GM12878 (cell line): ENCODE measurements at regions of chr11 and their contacts with region 1.

Region 1: DNA sequence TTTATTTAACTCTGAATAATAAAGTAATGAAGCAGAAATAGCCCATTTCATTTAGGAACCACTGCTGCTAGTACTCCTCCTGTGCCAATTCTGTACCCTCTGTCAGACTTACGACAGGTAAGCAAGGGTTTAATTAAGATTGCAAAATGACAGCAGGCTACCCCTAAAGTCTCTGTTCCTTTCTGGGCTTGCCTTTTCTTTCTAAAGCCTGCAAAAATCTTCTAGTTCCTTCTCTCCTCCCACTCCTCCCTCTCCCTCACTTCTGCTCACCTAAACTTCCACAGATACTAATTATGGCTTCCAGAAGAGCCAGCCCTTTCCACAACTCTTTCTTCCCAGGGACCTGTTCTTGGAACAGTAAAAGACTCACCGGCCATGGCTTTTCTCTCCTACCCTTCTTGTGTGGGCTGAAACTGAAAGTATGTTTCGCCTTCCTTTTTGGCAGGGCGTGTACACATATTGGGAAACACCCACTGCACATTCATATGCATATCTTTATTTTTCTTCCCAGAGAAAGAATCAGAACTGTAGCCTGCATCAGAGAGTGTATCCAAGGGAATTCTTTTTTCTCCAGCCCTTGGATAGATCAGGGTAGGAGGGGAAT is at the start of gene CARD16:
- DNase-seq: no peak
- ATAC-seq: peak; percentile 98
- H3K4me3 ChIP-seq: peak within 1 kb of the TSS; percentile 85
- H3K27ac ChIP-seq: no peak within 1 kb of the TSS
- H3K4me1 ChIP-seq: no peaks in the 10 kb centered on the region
- H3K27me3 ChIP-seq: no peaks in the 10 kb centered on the region
- CTCF ChIP-seq: no peak
- EP300 ChIP-seq: no peak
- POLR2A ChIP-seq: peak; percentile 38; the same call in 1 of the 2 replicates
- RAD21 ChIP-seq: no peak
- polyA plus RNA-seq, gene CARD16: 75.8 to 76.3 TPM

Region 2: GRCh38 chr11:104564921-104565582 is 480.0 kb before region 1 on chr11:
- CTCF ChIA-PET with region 1: no interaction called
- POLR2A ChIA-PET with region 1: no interaction called
- RAD21 ChIA-PET with region 1: no interaction called
- SMC1A ChIA-PET with region 1: no interaction called
- in situ Hi-C with region 1: no loop called
- intact Hi-C with region 1: no loop called
- DNase-seq: no peak
- ATAC-seq: no peak
- H3K4me3 ChIP-seq: no peak overlapping the region
- H3K27ac ChIP-seq: no peak overlapping the region
- H3K4me1 ChIP-seq: no peaks in the 10 kb centered on the region
- H3K27me3 ChIP-seq: no peaks in the 10 kb centered on the region
- CTCF ChIP-seq: no peak
- EP300 ChIP-seq: no peak
- POLR2A ChIP-seq: no peak
- RAD21 ChIP-seq: no peak

Region 3: GRCh38 chr11:105033343-105033742 is 11.7 kb before region 1 on chr11:
- CTCF ChIA-PET with region 1: interaction called, 6 read pairs
- POLR2A ChIA-PET with region 1: interaction called, 6 read pairs
- RAD21 ChIA-PET with region 1: interaction called, 9 read pairs
- SMC1A ChIA-PET with region 1: interaction called, 21 read pairs
- in situ Hi-C with region 1: no loop called
- intact Hi-C with region 1: no loop called
- DNase-seq: no peak
- ATAC-seq: peak; percentile 58
- H3K4me3 ChIP-seq: peak overlapping the region; percentile 58; the same call in 1 of the 2 replicates
- H3K27ac ChIP-seq: peak overlapping the region; percentile 10; the same call in 1 of the 2 replicates
- H3K4me1 ChIP-seq: 0 out of 2 replicates have a peak, but pooled peaks cover 3% of the 10 kb centered on the region
- H3K27me3 ChIP-seq: no peaks in the 10 kb centered on the region
- CTCF ChIP-seq: no peak
- EP300 ChIP-seq: no peak
- POLR2A ChIP-seq: no peak
- RAD21 ChIP-seq: no peak